Activated naive CD4-positive, alpha-beta T cell treated with anti-CD3 and anti-CD28 coated beads for 36 hours (primary cell): ENCODE measurements at regions of chr12 and their contacts with region 1.

Region 1: DNA sequence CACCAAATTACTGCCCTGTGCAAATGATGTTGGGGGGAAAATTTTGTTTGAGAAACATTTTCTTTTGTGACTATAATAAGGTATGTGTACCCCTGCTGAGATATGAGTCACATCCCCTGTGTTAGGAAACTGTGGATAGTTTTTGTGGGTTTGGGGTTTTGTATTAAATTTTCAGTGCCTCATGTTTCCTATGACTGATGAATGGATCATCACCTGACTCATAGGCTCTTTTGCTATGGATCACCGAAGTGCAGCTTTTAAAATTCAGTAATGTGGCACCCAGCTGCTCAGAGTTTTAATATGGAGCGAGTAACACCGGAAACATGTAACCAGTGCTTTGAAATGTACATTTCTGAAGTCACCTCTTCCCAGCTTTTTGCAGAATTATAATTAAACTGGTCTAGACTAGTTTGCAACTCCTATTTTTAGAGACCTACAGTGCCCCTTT is 167.4 kb upstream of the HMGA2 start:
- DNase-seq: peak; percentile 30
- H3K4me3 Mint-ChIP-seq: no peak overlapping the region
- H3K27ac Mint-ChIP-seq: peak overlapping the region; percentile 6
- H3K4me1 Mint-ChIP-seq: peaks cover 13% of the 10 kb centered on the region
- H3K27me3 Mint-ChIP-seq: peaks cover 30% of the 10 kb centered on the region

Region 2: GRCh38 chr12:65156366-65156841 is 500.5 kb before region 1 on chr12:
- CTCF ChIA-PET with region 1: no interaction called
- intact Hi-C with region 1: loop called (anchors 2 kb)
- DNase-seq: peak; percentile 35
- H3K4me3 Mint-ChIP-seq: peak overlapping the region; percentile 19
- H3K27ac Mint-ChIP-seq: peak overlapping the region; percentile 37
- H3K4me1 Mint-ChIP-seq: peaks cover 16% of the 10 kb centered on the region
- H3K27me3 Mint-ChIP-seq: peaks cover 12% of the 10 kb centered on the region

Region 3: DNA sequence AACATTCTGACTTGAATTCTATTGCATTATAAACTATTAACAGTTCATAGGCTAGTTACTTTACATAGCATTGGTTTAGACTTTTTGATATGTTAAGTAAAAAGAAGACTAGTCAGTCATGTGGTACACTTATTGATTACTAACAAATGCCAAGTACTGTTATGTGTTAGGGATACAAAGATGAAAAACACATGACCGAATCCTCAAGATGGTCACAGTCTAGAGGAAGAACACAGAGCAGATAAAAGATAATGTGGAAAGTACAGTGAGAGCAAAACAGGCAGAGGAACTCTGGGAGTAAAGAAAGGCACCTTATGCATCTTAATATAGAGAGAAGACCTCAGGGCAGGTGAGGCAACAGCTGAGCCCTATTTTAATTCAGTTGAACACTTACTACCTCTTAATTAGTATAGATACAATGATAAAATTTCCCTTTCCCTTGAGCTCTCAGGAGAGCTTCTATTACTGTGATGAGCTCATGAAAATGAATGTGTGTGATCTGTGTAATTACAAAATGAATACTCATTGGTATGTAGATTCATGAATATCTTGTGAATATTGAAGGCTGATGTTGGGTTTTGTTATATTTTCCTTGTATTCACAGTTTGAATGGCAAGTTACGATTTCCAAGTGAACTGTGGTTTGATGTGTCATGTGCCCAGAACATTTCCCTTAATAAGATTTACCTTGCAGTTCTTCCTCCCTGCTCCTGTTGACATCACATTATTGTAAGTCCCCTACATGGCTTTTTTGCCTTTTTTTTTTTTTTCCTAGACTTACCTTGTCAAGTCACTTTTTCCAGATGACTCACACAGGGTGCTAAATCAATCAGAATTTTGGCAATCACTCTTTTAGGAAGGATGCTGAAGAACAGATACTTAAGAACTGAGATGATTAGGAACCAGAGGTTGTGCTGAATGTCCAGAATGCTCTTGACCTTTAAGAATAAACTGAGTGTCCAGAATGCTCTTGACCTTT is 408.0 kb before region 1 on chr12:
- CTCF ChIA-PET with region 1: no interaction called
- intact Hi-C with region 1: loop called (anchors 5 kb)
- DNase-seq: peak; percentile 40
- H3K4me3 Mint-ChIP-seq: no peak overlapping the region
- H3K27ac Mint-ChIP-seq: peak overlapping the region; percentile 32
- H3K4me1 Mint-ChIP-seq: peaks cover 19% of the 10 kb centered on the region
- H3K27me3 Mint-ChIP-seq: no peaks in the 10 kb centered on the region

Region 4: GRCh38 chr12:65673732-65674131 is 16.8 kb after region 1 on chr12:
- CTCF ChIA-PET with region 1: no interaction called
- intact Hi-C with region 1: no loop called
- DNase-seq: no peak
- H3K4me3 Mint-ChIP-seq: no peak overlapping the region
- H3K27ac Mint-ChIP-seq: no peak overlapping the region
- H3K4me1 Mint-ChIP-seq: no peaks in the 10 kb centered on the region
- H3K27me3 Mint-ChIP-seq: peaks cover 37% of the 10 kb centered on the region

Region 5: DNA sequence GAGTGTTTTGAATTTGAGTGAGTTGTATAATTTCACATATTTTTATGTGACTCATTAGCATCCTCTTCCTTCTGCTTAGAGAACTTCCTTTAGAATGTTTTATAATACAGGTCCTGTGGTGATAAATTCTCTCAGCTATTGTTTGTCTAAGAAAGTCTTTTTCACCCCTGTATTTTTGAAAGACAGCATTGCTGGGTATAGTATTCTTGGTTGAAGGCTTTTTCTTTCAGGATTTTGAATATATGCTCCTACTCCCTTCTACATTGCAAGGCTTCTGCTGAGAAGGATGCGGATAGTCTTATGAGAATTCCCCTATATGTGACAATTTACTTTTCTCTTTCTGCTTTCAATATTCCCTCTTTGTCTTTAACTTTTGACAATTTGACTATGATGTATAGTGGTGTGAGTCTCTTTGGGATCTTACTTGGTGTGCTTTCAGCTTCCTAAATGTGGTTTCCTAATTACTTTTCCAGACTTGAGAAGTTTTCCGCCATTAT is 48.5 kb after region 1 on chr12:
- CTCF ChIA-PET with region 1: no interaction called
- intact Hi-C with region 1: no loop called
- DNase-seq: no peak
- H3K4me3 Mint-ChIP-seq: no peak overlapping the region
- H3K27ac Mint-ChIP-seq: no peak overlapping the region
- H3K4me1 Mint-ChIP-seq: no peaks in the 10 kb centered on the region
- H3K27me3 Mint-ChIP-seq: peaks cover 3% of the 10 kb centered on the region

Region 6: GRCh38 chr12:65740873-65741600 is 84.1 kb after region 1 on chr12:
- CTCF ChIA-PET with region 1: no interaction called
- intact Hi-C with region 1: loop called (anchors 5 kb)
- DNase-seq: peak; percentile 70
- H3K4me3 Mint-ChIP-seq: peak overlapping the region; percentile 62
- H3K27ac Mint-ChIP-seq: no peak overlapping the region
- H3K4me1 Mint-ChIP-seq: peaks cover 11% of the 10 kb centered on the region
- H3K27me3 Mint-ChIP-seq: peaks cover 25% of the 10 kb centered on the region

Region 7: DNA sequence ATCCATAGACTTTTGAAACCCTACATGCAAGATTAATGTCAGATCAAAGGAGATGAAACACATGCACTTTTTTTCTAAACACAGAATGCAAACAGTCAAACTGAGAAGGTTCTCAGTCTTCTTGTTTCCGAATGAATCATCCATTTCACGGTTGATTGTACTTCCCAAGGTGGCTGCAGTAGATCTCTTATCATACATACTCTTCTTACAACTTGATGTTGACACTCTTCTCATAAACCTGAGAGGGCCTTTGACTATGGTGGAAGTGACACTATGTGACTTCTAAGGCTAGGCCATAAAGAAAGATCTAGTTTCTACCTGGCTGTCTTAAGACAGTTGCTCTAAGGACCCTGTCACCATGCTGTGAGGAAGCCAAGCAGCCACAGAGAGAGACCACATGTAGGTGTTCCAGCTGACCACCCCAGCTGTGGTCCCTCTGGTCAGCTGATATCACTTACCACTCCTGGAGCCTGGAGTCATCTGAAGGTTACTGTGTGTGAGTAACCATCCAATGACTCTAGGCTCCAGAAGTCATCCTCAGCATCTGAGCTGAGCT is 100.1 kb after region 1 on chr12:
- CTCF ChIA-PET with region 1: no interaction called
- intact Hi-C with region 1: loop called (anchors 1 kb)
- DNase-seq: peak; percentile 6
- H3K4me3 Mint-ChIP-seq: no peak overlapping the region
- H3K27ac Mint-ChIP-seq: no peak overlapping the region
- H3K4me1 Mint-ChIP-seq: peaks cover 10% of the 10 kb centered on the region
- H3K27me3 Mint-ChIP-seq: peaks cover 16% of the 10 kb centered on the region

Region 8: GRCh38 chr12:65952737-65953209 is 295.8 kb after region 1 on chr12:
- CTCF ChIA-PET with region 1: no interaction called
- intact Hi-C with region 1: loop called (anchors 1 kb)
- DNase-seq: peak; percentile 8
- H3K4me3 Mint-ChIP-seq: no peak overlapping the region
- H3K27ac Mint-ChIP-seq: no peak overlapping the region
- H3K4me1 Mint-ChIP-seq: peaks cover 4% of the 10 kb centered on the region
- H3K27me3 Mint-ChIP-seq: peaks cover 12% of the 10 kb centered on the region